ENCODE measurements at regions of chr12 and their contacts with region 1.

Region 1: DNA sequence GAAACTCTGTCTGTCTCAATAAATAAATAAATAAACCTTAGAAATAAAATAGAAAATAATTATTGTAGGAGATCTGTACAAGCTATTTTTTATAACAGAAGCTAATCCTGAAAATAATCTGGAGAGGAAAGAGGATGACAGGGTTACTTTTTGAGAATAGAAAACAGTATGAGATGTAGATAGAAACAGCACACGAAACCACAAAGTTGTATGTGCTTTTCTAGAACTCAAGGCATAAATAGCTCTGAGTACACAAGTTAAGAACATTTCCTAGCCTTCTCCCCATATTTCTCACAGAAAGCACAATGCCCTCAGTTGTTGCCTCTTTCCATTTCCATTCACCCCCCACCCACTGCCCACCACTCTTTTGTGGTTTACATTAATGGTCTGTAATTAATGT is 35.7 kb downstream of the SLC38A4 start:
- DNase-seq: no peak
- H3K4me3 ChIP-seq: no peak overlapping the region
- H3K27ac ChIP-seq: no peak overlapping the region
- H3K4me1 ChIP-seq: peaks cover 0 to 2% (median 0%) of the 10 kb centered on the region in 4 donors
- H3K27me3 ChIP-seq: no peaks in the 10 kb centered on the region
- CTCF ChIP-seq: no peak

Region 2: DNA sequence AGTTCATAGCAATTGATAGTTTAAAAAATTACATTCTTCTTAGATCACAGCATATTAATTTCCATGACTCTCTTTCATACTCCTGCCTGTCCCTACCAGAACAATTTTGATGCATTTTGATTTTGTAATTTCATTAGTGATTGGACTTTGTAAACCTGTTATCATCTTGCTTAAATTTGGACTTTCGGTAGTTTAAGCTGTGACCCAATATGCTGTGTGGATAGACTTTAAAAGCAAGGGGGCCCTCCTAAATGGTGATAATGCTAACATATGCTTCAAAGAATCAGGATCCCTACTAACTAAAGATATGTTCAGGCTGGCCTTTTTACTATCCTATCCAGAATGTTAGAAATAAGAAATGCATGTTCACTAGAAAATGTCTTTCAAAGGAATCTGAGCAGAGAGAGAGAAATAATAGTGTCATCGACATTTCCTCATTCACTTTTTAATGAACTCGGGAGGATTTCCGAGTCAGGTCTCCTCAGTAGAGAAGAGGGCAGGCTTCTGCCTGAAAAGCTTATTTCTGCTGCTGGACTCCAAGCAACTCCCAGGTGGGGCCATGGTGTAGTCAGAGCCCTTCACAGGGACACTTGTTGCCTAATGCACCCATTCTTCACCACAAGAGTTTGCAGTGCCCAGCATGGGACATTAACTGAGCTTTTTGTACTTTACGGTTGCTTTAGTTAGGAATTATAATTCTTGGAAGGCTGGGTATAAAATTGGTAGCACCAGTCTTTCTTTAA is 19.1 kb after region 1 on chr12:
- intact Hi-C with region 1: loop called (anchors 2 kb)
- DNase-seq: no peak
- H3K4me3 ChIP-seq: no peak overlapping the region
- H3K27ac ChIP-seq: no peak overlapping the region
- H3K4me1 ChIP-seq: no peaks in the 10 kb centered on the region
- H3K27me3 ChIP-seq: no peaks in the 10 kb centered on the region
- CTCF ChIP-seq: no peak

Measured in tibial artery (tissue), 4 donors.